ENCODE measurements at regions of chr11 and their contacts with region 1.

Region 1: DNA sequence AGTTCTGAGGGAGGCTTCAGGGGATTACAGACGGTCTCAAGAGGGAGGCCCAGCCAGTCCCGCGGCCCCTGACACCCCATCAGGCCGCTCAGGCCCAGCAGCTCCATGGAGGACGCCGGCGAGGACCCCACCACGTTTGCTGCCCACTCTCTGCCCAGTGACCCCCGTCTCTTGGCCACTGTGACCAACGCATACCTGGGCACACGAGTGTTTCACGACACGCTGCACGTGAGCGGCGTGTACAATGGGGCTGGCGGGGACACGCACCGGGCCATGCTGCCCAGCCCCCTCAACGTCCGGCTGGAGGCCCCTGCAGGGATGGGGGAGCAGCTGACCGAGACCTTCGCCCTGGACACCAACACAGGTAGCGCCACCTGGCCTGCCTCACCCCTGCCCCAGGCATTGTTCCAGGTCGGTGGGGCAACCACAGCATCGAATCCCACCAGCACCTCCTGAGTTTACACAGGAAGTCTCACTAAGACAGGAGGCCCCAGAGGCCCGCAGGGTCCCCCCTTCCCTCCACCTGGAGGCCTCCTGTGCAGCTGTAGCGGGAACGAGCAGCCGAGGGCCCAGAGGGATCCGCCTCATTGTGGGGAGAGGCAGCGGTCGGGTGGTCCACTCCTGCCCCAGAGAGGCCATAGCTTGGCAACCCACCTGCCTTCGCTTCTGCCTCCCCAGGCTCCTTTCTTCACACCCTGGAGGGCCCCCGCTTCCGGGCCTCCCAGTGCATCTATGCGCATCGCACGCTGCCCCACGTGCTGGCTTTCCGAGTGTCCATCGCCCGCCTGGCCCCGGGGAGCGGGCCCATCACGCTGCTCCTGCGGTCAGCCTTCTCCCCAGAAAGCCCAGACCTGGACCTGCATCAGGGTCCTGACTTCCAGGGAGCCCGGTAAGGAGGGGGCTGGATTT is 1.0 kb downstream of the PGGHG start:
- DNase-seq: peak; percentile 22 to 60 (median 56)
- ATAC-seq: no peak
- H3K4me3 ChIP-seq: peak overlapping the region; percentile 30 to 68 (median 67)
- H3K27ac ChIP-seq: no peak overlapping the region
- H3K4me1 ChIP-seq: no peaks in the 10 kb centered on the region
- H3K27me3 ChIP-seq: no peaks in the 10 kb centered on the region
- CTCF ChIP-seq: no peak
- POLR2A ChIP-seq: no peak

Region 2: GRCh38 chr11:236774-237767 is 52.9 kb before region 1 on chr11 and contains the start of gene PSMD13:
- intact Hi-C with region 1: no loop called
- DNase-seq: peak; percentile 88 to 91 (median 90)
- ATAC-seq: peak; percentile 91 to 93 (median 93)
- H3K4me3 ChIP-seq: peak within 1 kb of the TSS; percentile 86 to 95 (median 95)
- H3K27ac ChIP-seq: peak within 1 kb of the TSS; percentile 80 to 94 (median 83)
- H3K4me1 ChIP-seq: peaks cover 0 to 16% (median 7%) of the 10 kb centered on the region in 4 donors
- H3K27me3 ChIP-seq: no peaks in the 10 kb centered on the region
- CTCF ChIP-seq: peak in 1 of 4 donors; percentile 0
- POLR2A ChIP-seq: no peak
- total RNA-seq, gene PSMD13: 46.1 to 71.5 (median 48.7) TPM

Region 3: DNA sequence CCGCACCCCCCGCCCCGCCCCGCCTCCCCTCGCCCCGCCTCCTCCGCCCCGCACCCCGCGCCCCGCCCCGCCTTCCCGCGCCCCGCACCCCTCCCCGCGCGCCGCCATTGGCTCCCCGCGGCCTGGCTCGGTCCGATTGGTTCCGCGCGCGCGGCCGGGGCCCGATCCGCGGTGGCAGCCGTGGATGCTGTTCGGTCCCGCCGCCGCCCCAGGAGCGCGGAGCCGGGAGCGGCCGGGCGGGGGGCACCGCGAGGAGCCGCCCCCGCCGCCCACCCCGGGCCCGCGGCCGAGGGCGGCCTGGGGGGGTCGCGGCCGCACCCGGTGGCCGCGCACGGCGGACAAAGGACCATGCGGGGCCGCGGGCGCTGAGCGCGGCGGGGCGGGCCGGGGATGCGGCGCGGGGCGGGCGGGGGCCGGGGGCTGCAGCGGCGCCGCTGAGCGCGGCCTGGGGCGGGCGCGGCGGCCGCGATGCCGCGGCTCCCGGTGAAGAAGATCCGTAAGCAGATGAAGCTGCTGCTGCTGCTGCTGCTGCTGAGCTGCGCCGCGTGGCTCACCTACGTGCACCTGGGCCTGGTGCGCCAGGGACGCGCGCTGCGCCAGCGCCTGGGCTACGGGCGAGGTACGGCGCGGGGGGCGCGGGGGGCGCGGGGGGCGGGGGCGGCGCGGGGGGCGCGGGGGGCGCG is 79.5 kb after region 1 on chr11 and contains the start of gene B4GALNT4:
- intact Hi-C with region 1: loop called in 1 of 2 experiments (anchors 5 kb)
- DNase-seq: peak in 1 of 3 donors; percentile 20
- ATAC-seq: no peak
- H3K4me3 ChIP-seq: no peak within 1 kb of the TSS
- H3K27ac ChIP-seq: no peak within 1 kb of the TSS
- H3K4me1 ChIP-seq: no peaks in the 10 kb centered on the region
- H3K27me3 ChIP-seq: peaks cover 0 to 10% of the 10 kb centered on the region in 2 donors
- CTCF ChIP-seq: no peak
- POLR2A ChIP-seq: no peak
- total RNA-seq, gene B4GALNT4: 0.05 to 0.07 TPM in 2 of 6 experiments, not detected in the others

Region 4: DNA sequence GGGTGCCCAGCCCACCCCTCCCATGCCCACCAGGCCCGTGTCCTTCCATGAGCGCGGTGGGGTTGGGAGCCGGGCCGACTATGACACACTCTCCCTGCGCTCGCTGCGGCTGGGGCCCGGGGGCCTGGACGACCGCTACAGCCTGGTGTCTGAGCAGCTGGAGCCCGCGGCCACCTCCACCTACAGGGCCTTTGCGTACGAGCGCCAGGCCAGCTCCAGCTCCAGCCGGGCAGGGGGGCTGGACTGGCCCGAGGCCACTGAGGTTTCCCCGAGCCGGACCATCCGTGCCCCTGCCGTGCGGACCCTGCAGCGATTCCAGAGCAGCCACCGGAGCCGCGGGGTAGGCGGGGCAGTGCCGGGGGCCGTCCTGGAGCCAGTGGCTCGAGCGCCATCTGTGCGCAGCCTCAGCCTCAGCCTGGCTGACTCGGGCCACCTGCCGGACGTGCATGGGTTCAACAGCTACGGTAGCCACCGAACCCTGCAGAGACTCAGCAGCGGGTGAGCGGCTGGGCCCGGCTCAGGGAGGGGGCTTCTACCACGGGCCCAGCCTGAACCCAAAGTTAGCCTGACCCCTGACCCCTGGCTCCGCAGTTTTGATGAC is 107.1 kb after region 1 on chr11:
- intact Hi-C with region 1: no loop called
- DNase-seq: peak in 1 of 3 donors; percentile 80
- ATAC-seq: peak; percentile 90 to 95 (median 94)
- H3K4me3 ChIP-seq: peak overlapping the region; percentile 29 to 42 (median 40)
- H3K27ac ChIP-seq: no peak overlapping the region
- H3K4me1 ChIP-seq: no peaks in the 10 kb centered on the region
- H3K27me3 ChIP-seq: no peaks in the 10 kb centered on the region
- CTCF ChIP-seq: peak; percentile 49 to 62 (median 56)
- POLR2A ChIP-seq: no peak

Region 5: DNA sequence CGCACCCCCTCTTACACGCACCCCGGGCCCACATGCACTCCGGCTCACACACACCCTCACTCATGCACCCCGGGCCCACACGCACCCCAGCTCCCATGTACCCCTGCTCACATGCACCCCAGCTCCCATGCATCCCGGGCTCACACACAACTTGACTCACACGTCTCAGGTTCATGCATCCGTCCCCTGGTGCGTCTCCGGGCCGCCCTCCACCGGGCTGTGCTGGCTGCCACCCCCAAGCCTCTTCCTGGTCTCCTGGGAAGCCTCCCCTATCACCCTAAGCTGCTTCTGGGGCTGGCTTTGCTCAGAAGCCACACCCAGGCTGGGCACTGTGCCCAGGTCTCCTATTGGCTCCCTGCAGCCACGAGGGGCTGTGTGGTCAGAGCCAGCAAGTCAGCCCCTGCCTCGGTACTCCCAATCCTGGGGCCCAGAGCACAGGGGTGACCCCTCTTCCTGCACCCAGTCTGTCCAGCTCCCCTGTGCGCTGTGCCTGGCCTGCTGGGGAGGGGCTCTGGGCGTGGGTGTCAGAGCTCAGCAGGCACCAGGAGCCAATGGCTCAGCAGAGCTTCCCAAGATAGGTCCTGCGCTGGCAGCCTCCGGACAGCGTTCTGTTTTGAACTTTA is 569.7 kb after region 1 on chr11:
- intact Hi-C with region 1: no loop called
- DNase-seq: peak in 1 of 3 donors; percentile 62
- ATAC-seq: peak; percentile 20 to 42 (median 30)
- H3K4me3 ChIP-seq: no peak overlapping the region
- H3K27ac ChIP-seq: no peak overlapping the region
- H3K4me1 ChIP-seq: no peaks in the 10 kb centered on the region
- H3K27me3 ChIP-seq: no peaks in the 10 kb centered on the region
- CTCF ChIP-seq: no peak
- POLR2A ChIP-seq: no peak

Measured in right lobe of liver (tissue), 6 donors.